ENCODE measurements at regions of chr16 and their contacts with region 1.

Region 1: DNA sequence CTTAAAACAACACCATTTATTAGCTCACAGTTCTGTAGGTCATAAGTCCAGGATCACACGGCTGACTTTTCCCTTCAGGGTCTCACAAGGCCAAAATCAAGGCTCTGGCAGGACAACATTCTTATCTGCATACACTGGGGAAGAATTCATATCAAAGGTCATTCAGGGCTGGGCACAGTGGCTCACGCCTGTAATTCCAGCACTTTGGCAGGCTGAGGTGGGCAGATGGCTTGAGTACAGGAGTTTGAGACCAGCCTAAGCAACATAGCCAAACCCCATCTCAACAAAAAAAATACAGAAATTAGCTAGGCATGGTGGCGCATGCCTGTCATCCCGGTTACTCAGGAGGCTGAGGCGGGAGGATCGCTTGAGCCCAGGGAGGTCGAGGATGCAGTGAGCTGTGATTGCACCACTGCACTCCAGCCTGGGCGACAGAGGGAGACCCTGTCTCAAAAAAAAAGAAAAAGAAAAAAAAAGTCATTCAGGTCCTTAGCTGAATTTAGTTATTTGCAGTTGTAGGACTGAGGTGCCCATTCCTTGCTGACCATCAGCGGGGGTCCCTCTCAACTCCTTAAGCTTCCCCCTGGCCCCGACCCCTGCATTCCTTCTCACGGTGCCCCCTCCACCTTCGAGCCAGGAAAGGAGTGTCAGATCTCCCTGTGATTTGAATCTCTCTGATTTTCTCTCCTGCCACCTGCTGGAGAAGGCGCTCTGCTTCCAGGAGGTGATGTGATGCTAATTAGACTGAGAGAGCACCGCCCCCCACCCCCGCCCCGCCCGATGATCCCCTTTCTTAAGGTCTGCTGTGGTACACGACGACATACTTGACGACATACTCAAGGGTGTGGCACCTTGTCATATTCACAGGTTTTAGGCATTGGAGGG is 91.8 kb upstream of the CLEC18A start:
- DNase-seq: peak in 4 of 5 donors; percentile 47 to 72 (median 59)
- ATAC-seq: peak; percentile 80 to 88 (median 82)
- H3K4me3 ChIP-seq: no peak overlapping the region
- H3K27ac ChIP-seq: peak overlapping the region; percentile 58 to 95 (median 88)
- H3K4me1 ChIP-seq: peaks cover 0 to 59% (median 35%) of the 10 kb centered on the region in 12 donors
- H3K27me3 ChIP-seq: no peaks in the 10 kb centered on the region
- CTCF ChIP-seq: peak in 11 of 12 donors; percentile 13 to 58 (median 35)
- POLR2A ChIP-seq: no peak

Region 2: DNA sequence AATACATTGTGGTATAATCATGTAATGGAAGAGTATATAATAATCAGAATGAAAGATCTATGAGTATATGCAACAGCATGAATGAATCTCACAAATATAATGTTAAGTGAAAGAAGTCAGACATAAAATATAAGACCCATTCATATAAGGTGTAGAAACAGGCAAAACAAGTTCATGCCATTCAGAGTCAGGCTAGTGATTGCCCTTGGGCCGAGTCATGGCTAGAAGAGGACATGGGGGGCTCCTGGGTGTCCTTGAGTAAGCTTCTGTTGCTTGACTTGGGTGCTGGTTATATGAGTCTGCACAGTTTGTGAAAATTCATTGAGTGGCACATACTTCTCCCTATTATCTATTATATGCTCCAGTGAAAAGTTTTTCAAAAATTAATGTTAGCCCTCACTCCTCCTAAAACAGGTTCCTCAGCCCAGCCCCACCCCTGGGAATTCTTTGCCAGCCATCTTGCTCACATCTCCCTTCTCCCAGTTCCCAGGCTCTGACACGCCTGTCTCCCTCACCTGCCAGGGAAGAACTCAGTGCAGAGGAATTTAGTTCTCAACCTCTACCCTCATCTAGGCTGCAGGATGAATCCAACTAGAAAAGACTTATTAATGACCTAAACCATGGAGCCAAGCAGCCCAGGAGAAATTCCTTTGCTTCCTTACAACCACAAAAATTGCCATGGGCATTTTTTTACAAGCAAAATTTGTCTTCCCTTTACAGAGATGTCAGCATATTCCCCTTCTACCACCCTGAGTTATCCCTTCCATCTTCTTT is 346.0 kb before region 1 on chr16:
- intact Hi-C with region 1: no loop called
- DNase-seq: no peak
- ATAC-seq: no peak
- H3K4me3 ChIP-seq: no peak overlapping the region
- H3K27ac ChIP-seq: no peak overlapping the region
- H3K4me1 ChIP-seq: peaks cover 0 to 16% (median 0%) of the 10 kb centered on the region in 12 donors
- H3K27me3 ChIP-seq: peaks cover 0 to 6% (median 0%) of the 10 kb centered on the region in 9 donors
- CTCF ChIP-seq: no peak
- POLR2A ChIP-seq: no peak

Region 3: GRCh38 chr16:69796351-69797118 is 62.8 kb before region 1 on chr16:
- intact Hi-C with region 1: loop called (anchors 2 to 10 kb)
- DNase-seq: peak in 3 of 5 donors; percentile 29 to 36 (median 32)
- ATAC-seq: peak; percentile 65 to 88 (median 78)
- H3K4me3 ChIP-seq: peak overlapping the region in 6 of 12 donors; percentile 20 to 35 (median 30)
- H3K27ac ChIP-seq: peak overlapping the region in 1 of 12 donors; percentile 15
- H3K4me1 ChIP-seq: peaks cover 0 to 10% (median 0%) of the 10 kb centered on the region in 12 donors
- H3K27me3 ChIP-seq: no peaks in the 10 kb centered on the region
- CTCF ChIP-seq: peak; percentile 81 to 95 (median 92)
- POLR2A ChIP-seq: no peak

Region 4: GRCh38 chr16:69839798-69840409 is 19.4 kb before region 1 on chr16:
- intact Hi-C with region 1: loop called in 1 of 10 experiments (anchors 2 kb)
- DNase-seq: peak; percentile 30 to 68 (median 66)
- ATAC-seq: peak; percentile 68 to 86 (median 82)
- H3K4me3 ChIP-seq: no peak overlapping the region
- H3K27ac ChIP-seq: peak overlapping the region in 11 of 12 donors; percentile 58 to 90 (median 80)
- H3K4me1 ChIP-seq: peaks cover 6 to 46% (median 31%) of the 10 kb centered on the region in 12 donors
- H3K27me3 ChIP-seq: no peaks in the 10 kb centered on the region
- CTCF ChIP-seq: no peak
- POLR2A ChIP-seq: no peak

Region 5: GRCh38 chr16:69924777-69925191 is 65.4 kb after region 1 on chr16:
- intact Hi-C with region 1: loop called in 4 of 10 experiments (anchors 1 to 10 kb)
- DNase-seq: peak; percentile 74 to 83 (median 81)
- ATAC-seq: peak; percentile 56 to 85 (median 82)
- H3K4me3 ChIP-seq: peak overlapping the region in 10 of 12 donors; percentile 36 to 61 (median 47)
- H3K27ac ChIP-seq: peak overlapping the region; percentile 76 to 92 (median 82)
- H3K4me1 ChIP-seq: peaks cover 5 to 71% (median 37%) of the 10 kb centered on the region in 12 donors
- H3K27me3 ChIP-seq: no peaks in the 10 kb centered on the region
- CTCF ChIP-seq: no peak
- POLR2A ChIP-seq: peak in 1 of 2 donors; percentile 69

Measured in heart left ventricle (tissue), 16 donors.